Ascending aorta (tissue), 2 donors: ENCODE measurements at regions of chr19 and their contacts with region 1.

Region 1: DNA sequence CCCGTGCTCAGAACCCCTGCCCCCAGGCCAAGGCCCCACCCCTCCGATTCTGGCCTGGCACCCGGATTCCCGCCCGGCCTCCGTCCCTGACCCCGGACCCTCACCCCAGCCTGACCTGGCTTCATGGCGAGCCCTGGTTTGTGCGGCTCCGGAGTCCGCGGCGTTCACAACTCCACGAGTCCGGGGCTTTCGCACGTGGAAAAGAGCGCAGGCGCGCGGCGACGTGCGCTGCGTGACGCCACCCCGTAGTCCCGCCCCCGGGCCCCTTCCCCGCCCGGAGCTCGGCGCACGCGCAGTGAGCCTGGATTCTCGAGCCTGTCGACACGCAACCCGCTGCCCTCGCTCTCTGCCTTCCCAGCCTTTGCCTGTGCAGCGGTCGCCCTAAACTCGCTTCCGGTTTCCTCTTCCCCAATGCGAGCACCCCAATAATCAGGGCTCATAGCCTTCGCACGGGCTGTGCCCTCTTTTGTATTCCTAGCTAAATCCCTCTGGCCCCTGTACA is at the start of gene FBL:
- DNase-seq: peak; percentile 49 to 97
- H3K4me3 ChIP-seq: peak within 1 kb of the TSS; percentile 75 to 82
- H3K27ac ChIP-seq: peak within 1 kb of the TSS; percentile 77 to 86
- H3K4me1 ChIP-seq: peaks cover 9 to 27% of the 10 kb centered on the region in 2 donors
- H3K27me3 ChIP-seq: no peaks in the 10 kb centered on the region
- CTCF ChIP-seq: no peak
- total RNA-seq, gene FBL: 92.1 TPM

Region 2: DNA sequence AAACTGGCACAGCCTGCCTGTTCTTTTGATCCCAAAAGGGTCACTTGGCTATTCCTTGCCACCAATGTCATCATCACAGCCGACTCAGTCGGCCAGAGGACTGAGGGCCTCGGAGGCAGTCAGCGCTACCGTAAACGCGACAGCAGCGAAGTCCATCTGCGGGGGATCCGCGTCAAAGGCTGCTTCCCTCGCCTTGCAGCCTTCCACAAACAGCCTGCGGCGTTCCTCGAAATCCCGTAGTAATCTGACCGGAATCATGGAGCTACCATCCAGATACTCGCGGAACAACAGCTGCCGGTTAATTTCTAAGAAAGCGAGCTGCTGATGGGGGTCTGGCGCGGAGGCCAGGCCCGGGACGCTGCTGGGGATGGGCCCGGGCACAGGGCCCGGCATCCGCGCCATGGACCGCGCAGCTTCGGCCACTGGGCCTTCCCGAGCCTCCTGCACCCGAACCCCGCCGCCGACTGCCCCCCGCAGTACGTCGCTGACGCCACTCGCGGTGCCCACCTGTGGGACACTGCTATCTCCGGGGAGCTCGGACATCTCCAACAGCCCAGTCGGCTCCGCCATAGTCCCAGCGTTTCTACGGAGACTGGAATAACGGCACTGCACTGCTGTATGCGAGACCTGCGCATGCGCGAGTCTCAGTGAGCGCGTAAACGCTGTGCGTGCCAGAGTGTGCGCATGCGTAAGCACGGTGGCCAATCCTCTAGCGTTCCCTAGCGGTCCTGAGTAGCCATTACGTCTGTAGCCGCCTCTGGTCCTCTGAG is 313.8 kb before region 1 on chr19 and contains the start of gene EID2B:
- intact Hi-C with region 1: loop called (anchors 5 kb)
- DNase-seq: peak; percentile 76 to 97
- H3K4me3 ChIP-seq: peak within 1 kb of the TSS; percentile 86 to 91
- H3K27ac ChIP-seq: peak within 1 kb of the TSS; percentile 74 to 84
- H3K4me1 ChIP-seq: peaks cover 6 to 11% of the 10 kb centered on the region in 2 donors
- H3K27me3 ChIP-seq: no peaks in the 10 kb centered on the region
- CTCF ChIP-seq: peak; percentile 96 to 99 (median 97)
- total RNA-seq, gene EID2B: not detected

Region 3: GRCh38 chr19:39792999-39793546 is 53.2 kb before region 1 on chr19:
- intact Hi-C with region 1: loop called (anchors 1 kb)
- DNase-seq: peak; percentile 11 to 88
- H3K4me3 ChIP-seq: peak overlapping the region; percentile 55 to 57
- H3K27ac ChIP-seq: no peak overlapping the region
- H3K4me1 ChIP-seq: no peaks in the 10 kb centered on the region
- H3K27me3 ChIP-seq: no peaks in the 10 kb centered on the region
- CTCF ChIP-seq: peak; percentile 82 to 91 (median 89)

Region 4: GRCh38 chr19:39833464-39834286 is 12.6 kb before region 1 on chr19 and contains the start of gene DYRK1B:
- intact Hi-C with region 1: loop called (anchors 1 kb)
- DNase-seq: peak; percentile 91 to 99
- H3K4me3 ChIP-seq: peak within 1 kb of the TSS; percentile 75 to 99
- H3K27ac ChIP-seq: peak within 1 kb of the TSS; percentile 77 to 93
- H3K4me1 ChIP-seq: peaks cover 0 to 17% of the 10 kb centered on the region in 2 donors
- H3K27me3 ChIP-seq: no peaks in the 10 kb centered on the region
- CTCF ChIP-seq: no peak
- total RNA-seq, gene DYRK1B: 34.7 TPM

Region 5: GRCh38 chr19:40190891-40191835 is 344.9 kb after region 1 on chr19 and contains the start of gene MAP3K10:
- intact Hi-C with region 1: loop called (anchors 5 kb)
- DNase-seq: peak in 1 of 2 donors; percentile 86
- H3K4me3 ChIP-seq: peak within 1 kb of the TSS; percentile 75 to 99
- H3K27ac ChIP-seq: peak within 1 kb of the TSS; percentile 92 to 99
- H3K4me1 ChIP-seq: peaks cover 9 to 22% of the 10 kb centered on the region in 2 donors
- H3K27me3 ChIP-seq: no peaks in the 10 kb centered on the region
- CTCF ChIP-seq: no peak
- total RNA-seq, gene MAP3K10: 19.4 TPM

Region 6: GRCh38 chr19:40285353-40286234 is 439.4 kb after region 1 on chr19:
- intact Hi-C with region 1: loop called (anchors 10 kb)
- DNase-seq: peak; percentile 97 to 99
- H3K4me3 ChIP-seq: peak overlapping the region; percentile 71 to 83
- H3K27ac ChIP-seq: peak overlapping the region; percentile 84 to 97
- H3K4me1 ChIP-seq: peaks cover 6 to 25% of the 10 kb centered on the region in 2 donors
- H3K27me3 ChIP-seq: no peaks in the 10 kb centered on the region
- CTCF ChIP-seq: no peak